Panc1 (cell line): ENCODE measurements at regions of chr12 and their contacts with region 1.

Region 1: DNA sequence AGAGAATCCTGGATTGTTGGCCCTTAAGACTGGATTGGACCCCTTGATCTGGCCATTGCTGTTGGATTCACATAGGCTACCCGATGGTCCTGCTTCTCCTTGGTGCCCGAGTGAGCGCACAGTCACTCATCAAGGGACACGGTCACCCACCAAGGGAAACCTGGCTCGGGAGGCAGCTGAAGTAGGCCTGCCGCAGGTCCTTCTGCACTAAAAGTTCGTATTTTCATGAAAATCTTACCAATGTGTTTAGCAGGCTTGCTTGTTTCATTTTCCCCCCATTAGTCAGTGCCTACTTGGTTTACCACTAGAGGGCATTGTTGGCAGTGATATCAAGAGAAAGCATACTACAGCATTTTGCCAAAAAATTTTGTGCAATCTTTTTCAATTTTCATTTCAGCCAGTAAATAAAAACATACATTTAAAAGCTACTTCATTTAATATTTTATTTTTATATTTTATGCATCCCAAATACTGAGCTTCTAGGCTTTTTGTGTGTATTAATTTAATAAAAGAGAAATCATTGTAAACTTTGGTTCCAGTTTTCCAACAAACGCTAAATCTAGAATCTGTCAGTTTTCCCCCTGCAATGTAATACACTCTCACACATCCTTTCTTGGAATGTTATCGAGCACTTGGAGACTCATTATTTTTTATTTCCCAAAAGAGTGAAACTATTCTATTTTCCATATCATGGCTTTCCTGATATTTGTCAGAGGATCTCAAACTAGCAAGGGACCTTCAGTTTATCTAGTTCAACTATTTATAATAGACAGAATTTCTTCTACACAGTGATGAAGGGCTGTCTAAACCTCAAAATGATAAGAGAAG is 116.7 kb downstream of the LMNTD1 start:
- DNase-seq: peak; percentile 82
- ATAC-seq: peak; percentile 90
- H3K4me3 ChIP-seq: peak overlapping the region; percentile 48 to 66
- H3K27ac ChIP-seq: peak overlapping the region; percentile 88
- H3K4me1 ChIP-seq: peaks cover 3% of the 10 kb centered on the region; the same call in 1 of the 2 replicates
- H3K27me3 ChIP-seq: no peaks in the 10 kb centered on the region
- CTCF ChIP-seq: peak; percentile 96

Region 2: GRCh38 chr12:25254271-25254880 is 182.0 kb before region 1 on chr12:
- CTCF ChIA-PET with region 1: no interaction called
- POLR2A ChIA-PET with region 1: no interaction called
- in situ Hi-C with region 1: no loop called
- intact Hi-C with region 1: no loop called
- DNase-seq: no peak
- ATAC-seq: no peak
- H3K4me3 ChIP-seq: no peak overlapping the region
- H3K27ac ChIP-seq: no peak overlapping the region
- H3K4me1 ChIP-seq: peaks cover 9% of the 10 kb centered on the region
- H3K27me3 ChIP-seq: peaks cover 6% of the 10 kb centered on the region; the same call in 1 of the 2 replicates
- CTCF ChIP-seq: no peak

Region 3: GRCh38 chr12:25482625-25483024 is 46.2 kb after region 1 on chr12:
- CTCF ChIA-PET with region 1: no interaction called
- POLR2A ChIA-PET with region 1: no interaction called
- in situ Hi-C with region 1: no loop called
- intact Hi-C with region 1: no loop called
- DNase-seq: no peak
- ATAC-seq: no peak
- H3K4me3 ChIP-seq: no peak overlapping the region
- H3K27ac ChIP-seq: no peak overlapping the region
- H3K4me1 ChIP-seq: no peaks in the 10 kb centered on the region
- H3K27me3 ChIP-seq: no peaks in the 10 kb centered on the region
- CTCF ChIP-seq: no peak

Region 4: DNA sequence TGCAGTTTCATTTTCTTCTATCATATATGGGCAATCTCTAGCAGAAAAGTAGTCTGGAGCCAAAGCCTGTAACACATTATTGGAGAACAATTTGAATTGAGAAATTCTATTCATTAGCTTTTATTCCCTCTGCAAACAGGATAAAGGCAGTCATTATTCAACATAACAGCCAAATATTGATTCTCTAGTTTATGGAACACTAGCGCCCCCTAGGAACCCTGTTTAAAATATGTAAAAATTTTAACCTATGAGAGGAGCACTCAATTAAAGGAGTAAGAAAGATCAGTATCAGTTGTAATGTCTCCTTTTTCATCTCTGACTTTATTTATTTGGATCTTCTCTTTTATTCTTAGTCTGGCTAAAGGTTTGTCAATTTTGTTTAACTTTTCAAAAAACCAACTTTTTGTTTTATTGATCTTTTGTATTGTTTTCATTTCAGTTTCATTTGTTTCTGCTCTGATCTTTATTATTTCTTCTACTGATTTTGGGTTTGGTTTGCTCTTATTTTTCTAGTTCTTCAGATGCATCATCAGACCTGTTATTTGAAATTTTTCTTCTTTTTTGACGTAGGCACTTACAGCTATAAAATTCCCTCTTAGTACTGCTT is 121.5 kb after region 1 on chr12:
- CTCF ChIA-PET with region 1: no interaction called
- POLR2A ChIA-PET with region 1: no interaction called
- in situ Hi-C with region 1: no loop called
- intact Hi-C with region 1: loop called (anchors 5 kb)
- DNase-seq: no peak
- ATAC-seq: no peak
- H3K4me3 ChIP-seq: no peak overlapping the region
- H3K27ac ChIP-seq: no peak overlapping the region
- H3K4me1 ChIP-seq: no peaks in the 10 kb centered on the region
- H3K27me3 ChIP-seq: no peaks in the 10 kb centered on the region
- CTCF ChIP-seq: peak; percentile 81; the same call in 1 of the 2 replicates

Region 5: GRCh38 chr12:25769076-25769945 is 332.9 kb after region 1 on chr12:
- CTCF ChIA-PET with region 1: no interaction called
- POLR2A ChIA-PET with region 1: no interaction called
- in situ Hi-C with region 1: no loop called
- intact Hi-C with region 1: loop called (anchors 10 kb)
- DNase-seq: no peak
- ATAC-seq: peak; percentile 95
- H3K4me3 ChIP-seq: no peak overlapping the region
- H3K27ac ChIP-seq: peak overlapping the region; percentile 3; the same call in 1 of the 2 replicates
- H3K4me1 ChIP-seq: peaks cover 4% of the 10 kb centered on the region; the same call in 1 of the 2 replicates
- H3K27me3 ChIP-seq: no peaks in the 10 kb centered on the region
- CTCF ChIP-seq: no peak